Left ventricle myocardium superior (tissue), 1 donor: ENCODE measurements at regions of chr1 and their contacts with region 1.

Region 1: DNA sequence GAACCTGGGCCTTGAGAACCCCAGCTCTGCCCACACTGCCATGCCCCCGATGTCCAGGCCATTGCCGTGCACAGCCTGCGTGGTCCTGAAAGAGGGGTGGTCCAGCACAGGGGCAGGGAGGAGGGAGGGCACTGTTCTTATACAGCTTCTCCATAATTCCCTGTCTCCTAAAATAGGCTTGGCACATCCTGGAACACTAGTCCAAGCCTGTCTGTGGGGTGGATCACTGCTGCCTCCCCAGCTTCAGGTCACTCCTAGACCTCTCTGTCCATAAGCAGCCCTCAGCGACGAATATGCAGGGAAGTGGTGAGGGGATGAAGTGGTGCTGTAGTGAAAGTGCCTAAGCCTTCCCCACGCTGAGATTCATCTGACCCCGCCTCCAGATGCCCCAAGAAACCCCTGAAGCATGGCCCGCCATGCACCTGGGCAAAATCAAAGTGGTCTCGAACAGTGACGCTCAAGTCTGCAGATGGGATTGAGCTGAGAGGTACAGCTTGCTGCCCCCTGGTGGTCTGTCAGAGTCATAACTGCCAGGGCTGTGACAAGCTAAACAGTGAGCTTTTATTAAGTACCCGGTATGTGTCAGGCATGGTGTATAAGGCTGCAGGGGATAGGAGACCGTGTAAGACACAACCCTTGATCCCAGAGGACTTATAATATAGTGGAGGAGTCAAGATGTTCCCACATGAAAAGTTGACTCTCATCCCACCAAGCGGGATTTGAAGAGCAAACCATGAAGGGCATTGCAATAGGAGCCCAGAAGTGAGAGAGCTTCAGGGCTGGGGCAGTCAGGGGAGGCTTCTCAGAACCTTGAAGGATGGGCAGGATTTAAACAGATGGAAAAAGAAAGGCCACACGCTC is 66.6 kb downstream of the FAM163A start:
- DNase-seq: peak; percentile 63
- ATAC-seq: peak; percentile 70

Region 2: GRCh38 chr1:179706339-179706941 is 103.3 kb before region 1 on chr1:
- intact Hi-C with region 1: loop called (anchors 5 kb)
- DNase-seq: no peak
- ATAC-seq: no peak